ENCODE measurements at regions of chr13 and their contacts with region 1.

Region 1: GRCh38 chr13:80363890-80364503 is 23.1 kb upstream of the SPRY2 start:
- DNase-seq: no peak
- H3K4me3 ChIP-seq: peak overlapping the region in 42 of 59 donors; percentile 5 to 54 (median 36)
- H3K27ac ChIP-seq: no peak overlapping the region
- H3K27me3 ChIP-seq: no peaks in the 10 kb centered on the region
- CTCF ChIP-seq: peak; percentile 77 to 98 (median 89)

Region 2: GRCh38 chr13:79541426-79542049 is 822.5 kb before region 1 on chr13:
- intact Hi-C with region 1: loop called (anchors 10 kb)
- DNase-seq: no peak
- H3K4me3 ChIP-seq: no peak overlapping the region
- H3K27ac ChIP-seq: peak overlapping the region in 25 of 59 donors; percentile 0 to 67 (median 50)
- H3K27me3 ChIP-seq: no peaks in the 10 kb centered on the region
- CTCF ChIP-seq: peak; percentile 79 to 100 (median 95)

Region 3: GRCh38 chr13:79679334-79679733 is 684.7 kb before region 1 on chr13:
- intact Hi-C with region 1: loop called in 1 of 2 experiments (anchors 10 kb)
- DNase-seq: peak in 7 of 10 donors; percentile 28 to 70 (median 46)
- H3K4me3 ChIP-seq: no peak overlapping the region
- H3K27ac ChIP-seq: no peak overlapping the region
- H3K27me3 ChIP-seq: no peaks in the 10 kb centered on the region
- CTCF ChIP-seq: peak; percentile 36 to 86 (median 70)

Region 4: DNA sequence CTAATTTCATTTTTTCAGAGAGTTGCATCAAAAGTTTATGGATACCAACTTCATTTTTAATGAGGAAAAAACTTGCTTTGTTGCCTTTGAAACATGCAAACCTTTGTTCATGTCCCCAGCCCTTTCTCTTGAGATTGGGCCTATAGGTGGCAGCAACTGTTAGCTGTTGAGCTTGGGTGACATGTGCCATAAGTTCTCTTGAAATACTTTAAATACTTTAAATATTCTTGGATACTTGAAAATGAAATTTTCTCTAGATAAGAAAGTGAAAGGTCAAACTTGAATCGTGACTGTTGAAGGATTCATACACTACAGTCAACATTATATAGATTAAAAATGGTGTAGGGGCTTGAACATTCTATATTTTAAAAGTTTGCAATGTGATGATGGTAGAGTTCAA is 588.2 kb before region 1 on chr13:
- intact Hi-C with region 1: loop called (anchors 2 to 10 kb)
- DNase-seq: peak in 5 of 10 donors; percentile 40 to 68 (median 50)
- H3K4me3 ChIP-seq: no peak overlapping the region
- H3K27ac ChIP-seq: no peak overlapping the region
- H3K27me3 ChIP-seq: no peaks in the 10 kb centered on the region
- CTCF ChIP-seq: peak in 55 of 56 donors; percentile 52 to 83 (median 72)